GM18951 (cell line): ENCODE measurements at regions of chr5 and their contacts with region 1.

Region 1: GRCh38 chr5:119743927-119744326 is 114.6 kb downstream of the FAM170A start:
- POLR2A ChIP-seq: no peak

Region 2: GRCh38 chr5:118987988-118988865 is 755.7 kb before region 1 on chr5 and contains the start of gene DTWD2:
- in situ Hi-C with region 1: loop called (anchors 25 kb)
- POLR2A ChIP-seq: peak; percentile 74

Region 3: DNA sequence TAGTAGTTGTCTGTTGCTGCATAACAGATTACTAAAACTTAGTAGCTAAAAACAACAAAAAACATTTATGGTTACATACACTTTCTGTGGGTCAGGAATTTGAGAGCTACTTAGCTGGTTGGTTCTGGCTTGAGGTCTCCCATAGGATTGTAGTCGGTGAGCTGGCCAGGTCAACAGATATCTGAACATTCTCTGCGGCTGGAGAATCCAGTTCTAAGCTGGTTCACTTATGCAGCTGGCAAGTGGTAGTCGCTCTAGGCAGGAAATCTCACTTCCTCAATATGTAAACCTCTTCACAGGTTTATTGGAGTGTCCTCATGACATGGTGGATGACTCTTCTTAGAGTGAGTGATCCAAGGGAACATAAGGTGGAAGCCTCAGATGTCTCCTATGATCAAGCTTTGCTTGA is 453.8 kb before region 1 on chr5:
- in situ Hi-C with region 1: no loop called
- POLR2A ChIP-seq: peak; percentile 51